ENCODE measurements at regions of chr5 and their contacts with region 1.

Region 1: GRCh38 chr5:156913719-156914370 is 49.2 kb downstream of the TIMD4 start:
- DNase-seq: peak; percentile 53
- H3K4me3 Mint-ChIP-seq: peak overlapping the region; percentile 73
- H3K27ac Mint-ChIP-seq: peak overlapping the region; percentile 99
- H3K4me1 Mint-ChIP-seq: peaks cover 85% of the 10 kb centered on the region
- H3K27me3 Mint-ChIP-seq: no peaks in the 10 kb centered on the region

Region 2: GRCh38 chr5:156850206-156850751 is 63.6 kb before region 1 on chr5 and contains the start of gene PPP1R2B:
- intact Hi-C with region 1: loop called (anchors 5 kb)
- DNase-seq: no peak
- H3K4me3 Mint-ChIP-seq: no peak within 1 kb of the TSS
- H3K27ac Mint-ChIP-seq: no peak within 1 kb of the TSS
- H3K4me1 Mint-ChIP-seq: peaks cover 22% of the 10 kb centered on the region
- H3K27me3 Mint-ChIP-seq: peaks cover 6% of the 10 kb centered on the region
- total RNA-seq, gene PPP1R2B: 0.39 and 0.86 TPM in 2 replicates

Region 3: DNA sequence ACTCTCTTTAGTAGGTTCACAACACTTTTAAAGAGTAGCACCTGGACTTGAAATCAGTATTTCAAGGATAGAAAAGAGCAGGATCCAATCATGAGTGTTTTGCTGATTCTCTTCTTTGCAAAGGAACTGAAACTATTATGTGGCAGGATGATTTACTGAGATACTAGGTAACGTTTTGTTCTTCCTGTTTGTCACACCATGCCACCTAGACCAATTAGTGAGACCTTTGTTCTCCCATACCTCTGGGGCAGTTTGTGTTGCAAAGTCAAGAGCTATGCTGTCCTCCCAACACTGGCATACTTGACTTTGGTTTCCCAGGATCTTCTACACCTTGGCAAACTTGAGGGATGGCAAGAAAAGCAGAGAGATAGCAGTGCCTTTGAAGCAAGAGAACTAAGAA is 20.3 kb before region 1 on chr5:
- intact Hi-C with region 1: loop called (anchors 2 kb)
- DNase-seq: no peak
- H3K4me3 Mint-ChIP-seq: peak overlapping the region; percentile 32
- H3K27ac Mint-ChIP-seq: peak overlapping the region; percentile 94
- H3K4me1 Mint-ChIP-seq: peaks cover 60% of the 10 kb centered on the region
- H3K27me3 Mint-ChIP-seq: no peaks in the 10 kb centered on the region

Region 4: GRCh38 chr5:156963125-156963524 is 49.3 kb after region 1 on chr5 and contains the start of gene TIMD4:
- intact Hi-C with region 1: no loop called
- DNase-seq: no peak
- H3K4me3 Mint-ChIP-seq: no peak within 1 kb of the TSS
- H3K27ac Mint-ChIP-seq: no peak within 1 kb of the TSS
- H3K4me1 Mint-ChIP-seq: peaks cover 13% of the 10 kb centered on the region
- H3K27me3 Mint-ChIP-seq: no peaks in the 10 kb centered on the region
- total RNA-seq, gene TIMD4: 24.5 and 27.3 TPM in 2 replicates

Measured in activated T-helper 1 cell treated with anti-CD3 and anti-CD28 coated beads, Interleukin-12 subunit alpha, Interleukin-12 subunit beta, Interleukin-2, Interleukin-4 antibody, amounts not matched to agents 30 ng/mL and 10 ng/mL and 1 ng/mL, durations not matched to agents 14 hours and 24 hours and 36 hours (primary cell).